ENCODE measurements at regions of chr3 and their contacts with region 1.

Region 1: GRCh38 chr3:126679318-126679751 is 24.4 kb upstream of the TXNRD3 start:
- DNase-seq: peak; percentile 83
- ATAC-seq: peak; percentile 84
- H3K4me3 ChIP-seq: peak overlapping the region in 4 of 5 experiments; percentile 20 to 60 (median 38)
- H3K4me3 Mint-ChIP-seq: peak overlapping the region; percentile 78
- H3K27ac ChIP-seq: no peak overlapping the region
- H3K27ac Mint-ChIP-seq: peak overlapping the region; percentile 29
- H3K4me1 ChIP-seq: peaks cover 14 to 29% of the 10 kb centered on the region in 2 donors
- H3K4me1 Mint-ChIP-seq: peaks cover 27% of the 10 kb centered on the region
- H3K27me3 ChIP-seq: peaks cover 0 to 14% (median 1%) of the 10 kb centered on the region in 4 experiments
- H3K27me3 Mint-ChIP-seq: peaks cover 12% of the 10 kb centered on the region
- CTCF ChIP-seq: peak; percentile 99

Region 2: DNA sequence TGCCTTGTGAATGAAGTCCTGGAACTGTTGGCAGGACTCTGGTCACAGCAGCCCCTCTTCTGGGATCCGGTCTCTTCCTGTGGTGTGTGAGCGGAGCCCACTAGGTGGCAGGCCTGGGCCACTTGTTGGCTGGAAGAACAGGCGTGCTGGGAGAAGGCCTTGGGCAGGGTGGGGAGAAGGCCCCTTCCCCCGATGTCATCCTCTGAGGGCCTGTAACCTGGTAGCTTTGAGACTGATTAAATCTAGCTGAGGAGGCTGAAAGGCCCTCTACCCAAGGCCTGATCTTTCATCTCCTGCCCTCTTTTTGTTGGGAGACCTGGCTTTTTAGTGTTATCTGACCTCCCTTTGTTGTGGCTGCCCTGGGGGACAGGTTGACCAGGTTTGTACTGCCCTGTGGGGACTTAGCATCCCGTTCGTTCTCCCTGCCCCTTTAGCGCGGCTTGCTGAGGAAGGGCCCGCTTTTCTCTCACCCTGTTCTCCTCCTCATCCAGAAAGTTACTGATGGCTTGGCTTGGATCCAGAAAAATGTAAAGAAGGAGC is 73.0 kb after region 1 on chr3:
- CTCF ChIA-PET with region 1: interaction called, 3 read pairs
- POLR2A ChIA-PET with region 1: no interaction called
- intact Hi-C with region 1: loop called (anchors 1 kb)
- DNase-seq: peak; percentile 63
- ATAC-seq: peak; percentile 82
- H3K4me3 ChIP-seq: no peak overlapping the region
- H3K4me3 Mint-ChIP-seq: no peak overlapping the region
- H3K27ac ChIP-seq: no peak overlapping the region
- H3K27ac Mint-ChIP-seq: no peak overlapping the region
- H3K4me1 ChIP-seq: no peaks in the 10 kb centered on the region
- H3K4me1 Mint-ChIP-seq: no peaks in the 10 kb centered on the region
- H3K27me3 ChIP-seq: no peaks in the 10 kb centered on the region
- H3K27me3 Mint-ChIP-seq: no peaks in the 10 kb centered on the region
- CTCF ChIP-seq: peak; percentile 76

Region 3: DNA sequence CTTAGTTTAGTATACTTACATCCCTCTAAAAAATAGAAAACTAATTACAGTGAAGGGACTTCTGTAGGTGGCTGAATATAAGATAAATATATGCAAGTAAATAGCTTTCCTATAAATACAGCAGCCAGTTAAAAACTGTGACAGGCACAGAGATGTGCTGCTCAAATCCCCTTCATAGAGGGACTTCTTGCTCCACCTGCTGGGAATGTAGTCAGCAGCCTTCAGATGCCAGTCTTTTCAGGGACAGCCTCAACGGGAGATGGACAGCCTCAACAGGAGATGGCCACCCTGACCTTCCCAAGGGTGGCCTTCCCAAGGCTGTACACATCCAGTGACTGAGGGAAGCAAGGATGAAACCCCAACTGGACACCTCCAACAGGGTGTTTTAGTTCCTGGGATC is 497.9 kb after region 1 on chr3:
- CTCF ChIA-PET with region 1: no interaction called
- POLR2A ChIA-PET with region 1: no interaction called
- intact Hi-C with region 1: loop called (anchors 2 kb)
- DNase-seq: no peak
- ATAC-seq: no peak
- H3K4me3 ChIP-seq: no peak overlapping the region
- H3K4me3 Mint-ChIP-seq: no peak overlapping the region
- H3K27ac ChIP-seq: no peak overlapping the region
- H3K27ac Mint-ChIP-seq: no peak overlapping the region
- H3K4me1 ChIP-seq: no peaks in the 10 kb centered on the region
- H3K4me1 Mint-ChIP-seq: no peaks in the 10 kb centered on the region
- H3K27me3 ChIP-seq: peaks cover 0 to 12% (median 0%) of the 10 kb centered on the region in 4 experiments
- H3K27me3 Mint-ChIP-seq: peaks cover 16% of the 10 kb centered on the region
- CTCF ChIP-seq: no peak

Region 4: GRCh38 chr3:127342735-127343134 is 663.4 kb after region 1 on chr3:
- CTCF ChIA-PET with region 1: no interaction called
- POLR2A ChIA-PET with region 1: no interaction called
- intact Hi-C with region 1: no loop called
- DNase-seq: no peak
- ATAC-seq: no peak
- H3K4me3 ChIP-seq: no peak overlapping the region
- H3K4me3 Mint-ChIP-seq: no peak overlapping the region
- H3K27ac ChIP-seq: no peak overlapping the region
- H3K27ac Mint-ChIP-seq: no peak overlapping the region
- H3K4me1 ChIP-seq: no peaks in the 10 kb centered on the region
- H3K4me1 Mint-ChIP-seq: no peaks in the 10 kb centered on the region
- H3K27me3 ChIP-seq: peaks cover 0 to 17% (median 5%) of the 10 kb centered on the region in 4 experiments
- H3K27me3 Mint-ChIP-seq: peaks cover 21% of the 10 kb centered on the region
- CTCF ChIP-seq: no peak

Region 5: DNA sequence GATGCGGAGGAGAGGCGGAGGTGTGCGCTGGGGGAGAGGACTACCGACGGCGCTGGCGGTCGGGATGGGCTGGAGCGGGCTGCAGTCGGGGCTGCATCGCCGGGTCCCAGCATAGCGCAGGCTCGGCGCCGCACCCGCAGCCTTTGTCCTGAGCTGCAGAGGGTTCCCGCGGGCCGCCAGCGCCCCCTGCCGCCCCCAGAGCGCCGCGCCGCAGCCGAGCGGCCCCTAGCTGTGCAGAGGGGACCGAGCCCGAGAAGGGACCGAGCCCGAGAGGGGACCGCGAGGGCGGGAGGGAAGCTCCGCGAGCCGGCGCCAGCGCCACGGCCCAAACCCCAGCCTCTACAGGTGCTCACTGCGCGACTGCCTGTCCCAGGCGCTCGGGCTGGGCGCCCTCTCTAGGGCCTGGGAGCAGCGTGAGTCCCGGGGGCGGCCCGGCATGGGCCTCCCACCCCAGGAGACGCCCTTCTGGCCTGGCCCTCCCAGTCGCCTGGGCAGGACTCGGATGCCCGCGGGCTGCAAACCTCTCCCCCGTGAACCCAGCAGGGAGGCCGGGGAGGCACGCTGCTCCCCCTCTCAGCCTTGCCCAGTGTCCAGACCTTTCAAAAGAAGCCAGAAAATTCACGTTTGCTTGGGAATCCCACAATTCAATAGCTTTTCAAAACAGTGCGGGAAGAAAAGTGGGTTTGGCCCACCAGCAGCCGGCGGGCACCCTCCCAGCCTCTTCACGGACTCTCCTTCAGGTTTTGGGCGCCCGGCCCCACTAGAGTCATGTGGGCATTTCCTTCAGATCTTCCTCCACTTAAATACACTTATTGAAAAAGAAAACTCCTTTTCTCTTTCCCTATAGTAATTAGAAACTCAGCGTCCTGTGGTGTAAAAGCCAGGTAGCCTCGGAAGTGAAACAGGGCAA is 776.5 kb after region 1 on chr3:
- CTCF ChIA-PET with region 1: interaction called, 34 read pairs
- POLR2A ChIA-PET with region 1: no interaction called
- intact Hi-C with region 1: no loop called
- DNase-seq: peak; percentile 45
- ATAC-seq: peak; percentile 58
- H3K4me3 ChIP-seq: no peak overlapping the region
- H3K4me3 Mint-ChIP-seq: peak overlapping the region; percentile 18
- H3K27ac ChIP-seq: no peak overlapping the region
- H3K27ac Mint-ChIP-seq: no peak overlapping the region
- H3K4me1 ChIP-seq: peaks cover 3 to 11% of the 10 kb centered on the region in 2 donors
- H3K4me1 Mint-ChIP-seq: peaks cover 6% of the 10 kb centered on the region
- H3K27me3 ChIP-seq: peaks cover 0 to 51% (median 12%) of the 10 kb centered on the region in 4 experiments
- H3K27me3 Mint-ChIP-seq: peaks cover 60% of the 10 kb centered on the region
- CTCF ChIP-seq: peak; percentile 63

Region 6: DNA sequence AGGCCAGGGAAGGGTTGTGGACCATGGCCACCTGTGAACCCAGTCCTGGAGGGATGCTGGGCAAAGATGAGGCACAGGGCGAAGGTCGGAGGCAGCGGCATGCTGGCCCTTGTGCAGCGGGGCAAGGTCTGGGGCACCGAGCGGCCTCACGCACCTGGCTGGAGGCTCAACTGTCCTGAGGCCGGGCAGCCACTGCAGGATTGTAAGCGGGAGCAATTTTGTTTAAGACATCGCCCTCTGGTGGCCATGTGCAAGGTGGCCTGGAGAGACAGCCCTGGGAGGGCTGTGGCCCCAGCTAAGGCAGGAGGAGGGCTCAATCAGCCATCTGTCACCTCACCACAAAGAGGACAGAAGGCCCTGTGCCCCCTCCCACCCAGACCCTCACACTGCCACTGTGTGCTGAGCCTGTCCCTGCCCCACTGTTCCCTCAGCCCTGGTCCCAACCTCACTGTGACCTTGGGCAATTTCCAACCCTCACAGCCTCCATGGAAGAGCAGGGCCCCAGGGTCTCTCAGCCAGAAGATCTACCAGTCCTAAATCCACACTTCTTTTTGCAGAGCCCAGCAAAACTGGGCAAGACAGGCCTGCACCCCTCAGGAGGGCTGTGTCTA is 865.0 kb after region 1 on chr3:
- CTCF ChIA-PET with region 1: interaction called, 119 read pairs
- POLR2A ChIA-PET with region 1: interaction called, 6 read pairs
- intact Hi-C with region 1: loop called (anchors 1 kb)
- DNase-seq: peak; percentile 74
- ATAC-seq: peak; percentile 39
- H3K4me3 ChIP-seq: no peak overlapping the region
- H3K4me3 Mint-ChIP-seq: no peak overlapping the region
- H3K27ac ChIP-seq: no peak overlapping the region
- H3K27ac Mint-ChIP-seq: no peak overlapping the region
- H3K4me1 ChIP-seq: peaks cover 3 to 15% of the 10 kb centered on the region in 2 donors
- H3K4me1 Mint-ChIP-seq: peaks cover 9% of the 10 kb centered on the region
- H3K27me3 ChIP-seq: peaks cover 0 to 3% (median 0%) of the 10 kb centered on the region in 4 experiments
- H3K27me3 Mint-ChIP-seq: peaks cover 12% of the 10 kb centered on the region
- CTCF ChIP-seq: peak; percentile 85

Region 7: DNA sequence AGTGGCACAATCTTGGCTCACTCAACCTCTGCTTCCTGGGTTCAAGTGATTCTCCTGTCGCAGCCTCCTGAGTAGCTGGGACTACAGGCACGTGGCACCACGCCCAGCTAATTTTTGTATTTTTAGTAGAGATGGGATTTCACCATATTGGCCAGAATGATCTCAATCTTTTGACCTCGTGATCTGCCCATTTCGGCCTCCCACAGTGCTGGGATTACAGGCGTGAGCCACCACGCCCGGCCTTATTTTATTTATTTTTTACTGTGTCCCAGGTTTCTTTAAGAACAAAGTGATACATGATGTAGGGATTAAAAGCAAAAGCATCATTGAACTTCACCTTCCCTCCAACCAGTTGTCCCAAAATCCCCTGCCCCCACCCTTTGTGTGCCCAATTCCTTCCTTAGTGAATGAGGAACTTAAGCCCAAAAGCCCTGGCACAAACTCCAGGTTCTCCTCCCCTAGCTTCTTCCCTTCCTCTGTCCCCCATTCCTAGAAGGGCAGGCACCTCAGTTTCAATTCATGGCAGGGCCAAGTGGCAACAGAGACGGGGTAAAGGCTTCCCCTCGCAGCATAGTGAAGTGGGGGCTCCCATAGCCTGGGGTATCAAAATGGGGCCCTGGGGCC is 1994.9 kb after region 1 on chr3:
- CTCF ChIA-PET with region 1: no interaction called
- POLR2A ChIA-PET with region 1: no interaction called
- intact Hi-C with region 1: no loop called
- DNase-seq: no peak
- ATAC-seq: no peak
- H3K4me3 ChIP-seq: peak overlapping the region in 1 of 5 experiments; percentile 26
- H3K4me3 Mint-ChIP-seq: no peak overlapping the region
- H3K27ac ChIP-seq: no peak overlapping the region
- H3K27ac Mint-ChIP-seq: no peak overlapping the region
- H3K4me1 ChIP-seq: peaks cover 0 to 9% of the 10 kb centered on the region in 2 donors
- H3K4me1 Mint-ChIP-seq: peaks cover 15% of the 10 kb centered on the region
- H3K27me3 ChIP-seq: no peaks in the 10 kb centered on the region
- H3K27me3 Mint-ChIP-seq: no peaks in the 10 kb centered on the region
- CTCF ChIP-seq: no peak

Measured in B cell (primary cell).